Activated naive CD4-positive, alpha-beta T cell treated with anti-CD3 and anti-CD28 coated beads for 36 hours (primary cell): ENCODE measurements at regions of chr4 and their contacts with region 1.

Region 1: GRCh38 chr4:36394352-36394903 is 113.0 kb downstream of the DTHD1 start:
- DNase-seq: peak; percentile 63
- H3K4me3 Mint-ChIP-seq: peak overlapping the region; percentile 55
- H3K27ac Mint-ChIP-seq: peak overlapping the region; percentile 97
- H3K4me1 Mint-ChIP-seq: peaks cover 21% of the 10 kb centered on the region
- H3K27me3 Mint-ChIP-seq: no peaks in the 10 kb centered on the region

Region 2: DNA sequence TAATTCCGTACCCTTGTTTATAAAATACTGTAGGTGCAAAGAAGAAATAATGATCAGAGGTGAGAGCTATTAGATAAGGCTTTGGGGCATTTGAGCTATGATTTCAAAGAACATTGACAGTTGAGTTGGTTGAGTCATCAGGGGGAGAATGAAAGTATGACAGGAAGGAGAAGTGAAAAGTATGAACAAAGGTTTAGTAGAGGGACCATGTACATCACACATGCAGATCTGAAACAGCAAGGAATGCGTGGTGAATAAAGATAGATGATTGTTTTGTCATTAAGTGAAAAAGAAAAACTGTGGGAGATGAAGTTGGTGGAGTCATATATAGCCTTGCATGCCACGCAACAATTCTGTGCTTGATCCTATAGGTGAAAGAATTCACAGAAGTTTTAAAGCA is 313.2 kb before region 1 on chr4:
- CTCF ChIA-PET with region 1: no interaction called
- intact Hi-C with region 1: loop called (anchors 1 kb)
- DNase-seq: peak; percentile 48
- H3K4me3 Mint-ChIP-seq: no peak overlapping the region
- H3K27ac Mint-ChIP-seq: no peak overlapping the region
- H3K4me1 Mint-ChIP-seq: peaks cover 2% of the 10 kb centered on the region
- H3K27me3 Mint-ChIP-seq: no peaks in the 10 kb centered on the region

Region 3: GRCh38 chr4:36244257-36245079 is 150.0 kb before region 1 on chr4 and contains the start of gene ARAP2:
- CTCF ChIA-PET with region 1: interaction called, 18 read pairs
- intact Hi-C with region 1: loop called (anchors 1 kb)
- DNase-seq: peak; percentile 77
- H3K4me3 Mint-ChIP-seq: peak within 1 kb of the TSS; percentile 94
- H3K27ac Mint-ChIP-seq: peak within 1 kb of the TSS; percentile 88
- H3K4me1 Mint-ChIP-seq: peaks cover 24% of the 10 kb centered on the region
- H3K27me3 Mint-ChIP-seq: no peaks in the 10 kb centered on the region
- total RNA-seq, gene ARAP2: 29.6 to 38.2 TPM

Region 4: GRCh38 chr4:36316607-36317006 is 77.8 kb before region 1 on chr4:
- CTCF ChIA-PET with region 1: no interaction called
- intact Hi-C with region 1: loop called (anchors 1 kb)
- DNase-seq: peak; percentile 22
- H3K4me3 Mint-ChIP-seq: no peak overlapping the region
- H3K27ac Mint-ChIP-seq: peak overlapping the region; percentile 80
- H3K4me1 Mint-ChIP-seq: peaks cover 48% of the 10 kb centered on the region
- H3K27me3 Mint-ChIP-seq: no peaks in the 10 kb centered on the region